ENCODE measurements at regions of chr17 and their contacts with region 1.

Region 1: GRCh38 chr17:77068915-77069314 is 71.9 kb upstream of the SEC14L1 start:
- DNase-seq: no peak
- ATAC-seq: no peak
- H3K4me3 ChIP-seq: no peak overlapping the region
- H3K27ac ChIP-seq: no peak overlapping the region
- H3K4me1 ChIP-seq: no peaks in the 10 kb centered on the region
- H3K27me3 ChIP-seq: no peaks in the 10 kb centered on the region
- CTCF ChIP-seq: no peak

Region 2: DNA sequence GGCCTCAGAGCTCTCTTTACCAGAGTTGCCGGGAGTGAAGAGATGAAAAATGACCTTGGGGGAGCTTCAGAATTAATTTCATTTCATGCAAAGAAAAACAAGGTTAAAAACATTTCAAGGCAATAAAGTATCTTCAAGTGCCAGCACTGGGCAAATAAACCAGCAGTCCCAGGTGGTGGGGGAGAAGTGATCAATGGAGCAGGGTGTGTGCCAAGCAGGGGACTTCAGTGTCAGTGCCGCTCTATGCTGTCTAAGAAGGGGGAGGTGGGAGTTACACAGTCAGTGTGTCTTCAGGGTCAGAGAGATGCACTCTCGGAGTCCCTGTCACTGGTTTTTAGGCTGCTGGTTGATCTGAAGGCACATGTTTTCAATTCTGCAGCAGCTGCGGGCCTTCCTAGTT is 258.0 kb before region 1 on chr17:
- CTCF ChIA-PET with region 1: interaction called, 3 read pairs
- POLR2A ChIA-PET with region 1: no interaction called
- in situ Hi-C with region 1: no loop called
- intact Hi-C with region 1: loop called (anchors 5 kb)
- DNase-seq: no peak
- ATAC-seq: no peak
- H3K4me3 ChIP-seq: no peak overlapping the region
- H3K27ac ChIP-seq: no peak overlapping the region
- H3K4me1 ChIP-seq: no peaks in the 10 kb centered on the region
- H3K27me3 ChIP-seq: no peaks in the 10 kb centered on the region
- CTCF ChIP-seq: no peak

Region 3: GRCh38 chr17:76961869-76962268 is 107.0 kb before region 1 on chr17:
- CTCF ChIA-PET with region 1: interaction called, 11 read pairs
- POLR2A ChIA-PET with region 1: no interaction called
- in situ Hi-C with region 1: no loop called
- intact Hi-C with region 1: no loop called
- DNase-seq: no peak
- ATAC-seq: no peak
- H3K4me3 ChIP-seq: no peak overlapping the region
- H3K27ac ChIP-seq: no peak overlapping the region
- H3K4me1 ChIP-seq: no peaks in the 10 kb centered on the region
- H3K27me3 ChIP-seq: no peaks in the 10 kb centered on the region; the same call in 1 of the 2 replicates
- CTCF ChIP-seq: no peak

Region 4: GRCh38 chr17:76972046-76972641 is 96.8 kb before region 1 on chr17:
- CTCF ChIA-PET with region 1: no interaction called
- POLR2A ChIA-PET with region 1: no interaction called
- in situ Hi-C with region 1: no loop called
- intact Hi-C with region 1: no loop called
- DNase-seq: no peak
- ATAC-seq: no peak
- H3K4me3 ChIP-seq: no peak overlapping the region
- H3K27ac ChIP-seq: no peak overlapping the region
- H3K4me1 ChIP-seq: peaks cover 10% of the 10 kb centered on the region
- H3K27me3 ChIP-seq: no peaks in the 10 kb centered on the region
- CTCF ChIP-seq: no peak

Region 5: DNA sequence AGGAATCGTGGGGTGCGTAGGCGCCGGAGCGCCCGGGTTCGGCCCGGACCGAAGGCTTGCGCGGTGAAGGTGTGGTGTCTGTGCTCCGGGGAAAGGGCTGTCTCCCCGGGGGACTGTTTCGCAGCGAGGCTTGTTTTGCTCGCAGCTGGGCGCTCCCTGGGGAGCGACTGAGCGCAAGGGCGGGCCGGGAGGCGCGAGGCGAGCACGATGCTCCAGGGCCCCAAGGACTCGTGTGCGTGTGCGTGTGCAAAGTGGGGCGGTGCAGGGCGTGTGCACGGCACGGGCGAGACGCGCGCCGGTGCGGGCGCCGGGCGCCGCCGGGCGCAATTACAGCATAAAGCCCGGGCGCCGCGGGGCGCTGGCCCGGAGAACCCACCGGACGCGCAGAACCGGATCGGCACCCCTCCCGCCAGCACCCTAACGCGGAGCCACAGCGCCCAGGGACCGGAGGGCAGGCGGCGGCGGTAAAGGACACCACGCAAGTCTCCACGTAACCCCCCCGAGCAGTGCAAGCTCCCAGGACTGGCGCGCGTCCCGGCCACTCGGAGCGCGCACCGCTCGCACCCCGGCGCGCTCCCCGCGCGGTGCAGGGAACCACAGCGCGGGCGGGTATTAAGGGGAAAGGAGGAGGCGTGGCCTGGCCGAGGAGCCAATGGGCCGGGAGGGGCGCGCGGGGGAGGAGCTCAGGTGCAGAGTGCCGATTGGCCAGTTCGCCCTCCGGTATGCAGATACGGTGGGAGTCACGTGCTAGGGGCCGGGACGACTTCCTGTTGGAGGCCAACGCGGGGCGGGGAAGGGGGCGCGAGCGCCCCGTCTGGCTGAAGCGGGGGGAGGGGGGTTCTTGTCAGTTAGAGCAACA is 889.2 kb after region 1 on chr17 and contains the start of gene TNRC6C:
- CTCF ChIA-PET with region 1: no interaction called
- POLR2A ChIA-PET with region 1: no interaction called
- in situ Hi-C with region 1: no loop called
- intact Hi-C with region 1: no loop called
- DNase-seq: peak; percentile 79
- ATAC-seq: peak; percentile 95
- H3K4me3 ChIP-seq: peak within 1 kb of the TSS; percentile 70 to 71
- H3K27ac ChIP-seq: peak within 1 kb of the TSS; percentile 21; the same call in 1 of the 2 replicates
- H3K4me1 ChIP-seq: peaks cover 25% of the 10 kb centered on the region
- H3K27me3 ChIP-seq: peaks cover 19% of the 10 kb centered on the region
- CTCF ChIP-seq: peak; percentile 32; the same call in 1 of the 2 replicates
- total RNA-seq, gene TNRC6C: 10.1 TPM